ENCODE measurements at regions of chr11 and their contacts with region 1.

Region 1: GRCh38 chr11:1146365-1146764 is 11.4 kb upstream of the MUC5AC start:
- DNase-seq: no peak
- H3K4me3 ChIP-seq: no peak overlapping the region
- H3K27ac ChIP-seq: no peak overlapping the region
- H3K4me1 ChIP-seq: peaks cover 13% of the 10 kb centered on the region
- H3K27me3 ChIP-seq: no peaks in the 10 kb centered on the region
- CTCF ChIP-seq: no peak

Region 2: GRCh38 chr11:819129-819931 is 327.0 kb before region 1 on chr11:
- CTCF ChIA-PET with region 1: no interaction called
- POLR2A ChIA-PET with region 1: no interaction called
- intact Hi-C with region 1: no loop called
- DNase-seq: peak; percentile 65 to 87
- H3K4me3 ChIP-seq: peak overlapping the region; percentile 84
- H3K27ac ChIP-seq: peak overlapping the region; percentile 87
- H3K4me1 ChIP-seq: peaks cover 12% of the 10 kb centered on the region
- H3K27me3 ChIP-seq: no peaks in the 10 kb centered on the region
- CTCF ChIP-seq: no peak

Region 3: GRCh38 chr11:1103401-1104325 is 42.7 kb before region 1 on chr11:
- CTCF ChIA-PET with region 1: no interaction called
- POLR2A ChIA-PET with region 1: interaction called, 26 read pairs
- intact Hi-C with region 1: no loop called
- DNase-seq: no peak
- H3K4me3 ChIP-seq: no peak overlapping the region
- H3K27ac ChIP-seq: no peak overlapping the region
- H3K4me1 ChIP-seq: no peaks in the 10 kb centered on the region
- H3K27me3 ChIP-seq: peaks cover 22% of the 10 kb centered on the region
- CTCF ChIP-seq: no peak